ENCODE measurements at regions of chr10 and their contacts with region 1.

Region 1: DNA sequence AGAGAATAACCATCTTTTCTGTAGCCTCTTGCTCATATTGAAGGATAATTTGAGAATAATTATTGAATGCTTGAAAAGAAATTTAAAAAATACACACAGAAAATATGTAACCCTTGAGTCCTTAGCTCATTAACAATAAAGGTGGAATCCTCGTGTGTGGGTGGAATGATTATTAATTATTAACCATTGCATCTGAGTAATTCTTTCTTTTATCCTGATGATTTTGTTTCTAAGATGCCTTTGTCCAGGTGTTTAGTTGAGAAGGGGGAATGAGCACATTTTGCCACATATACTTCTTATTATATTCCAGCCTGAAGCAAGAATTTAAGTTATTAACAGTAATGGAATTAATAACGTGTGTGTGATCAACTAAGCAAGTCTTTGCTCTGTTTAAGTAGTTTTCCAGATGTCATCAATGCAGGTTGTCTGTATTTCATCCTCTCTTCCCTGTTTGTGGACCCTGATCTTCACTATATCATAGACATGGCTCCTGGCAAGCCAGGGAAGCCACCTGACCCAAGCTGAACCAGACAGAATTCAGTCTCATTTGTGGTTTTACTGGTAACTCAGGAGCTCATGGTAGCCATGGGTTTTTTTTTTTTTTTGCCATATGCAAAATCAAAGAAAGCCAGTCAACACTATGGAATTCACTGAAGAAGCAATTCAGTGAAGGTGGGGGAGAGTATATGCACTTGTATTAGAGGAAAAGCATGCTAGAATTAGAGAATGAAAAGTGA is 144.3 kb downstream of the KIF20B start:
- DNase-seq: peak; percentile 20 to 73
- H3K4me3 ChIP-seq: no peak overlapping the region
- H3K27ac ChIP-seq: no peak overlapping the region
- H3K4me1 ChIP-seq: peaks cover 20% of the 10 kb centered on the region
- H3K27me3 ChIP-seq: no peaks in the 10 kb centered on the region
- CTCF ChIP-seq: no peak

Region 2: GRCh38 chr10:89921422-89921821 is 75.7 kb after region 1 on chr10:
- CTCF ChIA-PET with region 1: no interaction called
- POLR2A ChIA-PET with region 1: no interaction called
- intact Hi-C with region 1: loop called (anchors 1 kb)
- DNase-seq: peak; percentile 64 to 99
- H3K4me3 ChIP-seq: no peak overlapping the region
- H3K27ac ChIP-seq: peak overlapping the region; percentile 71
- H3K4me1 ChIP-seq: peaks cover 61% of the 10 kb centered on the region
- H3K27me3 ChIP-seq: no peaks in the 10 kb centered on the region
- CTCF ChIP-seq: no peak

Region 3: GRCh38 chr10:89992575-89992974 is 146.9 kb after region 1 on chr10:
- CTCF ChIA-PET with region 1: no interaction called
- POLR2A ChIA-PET with region 1: no interaction called
- intact Hi-C with region 1: no loop called
- DNase-seq: no peak
- H3K4me3 ChIP-seq: no peak overlapping the region
- H3K27ac ChIP-seq: no peak overlapping the region
- H3K4me1 ChIP-seq: no peaks in the 10 kb centered on the region
- H3K27me3 ChIP-seq: no peaks in the 10 kb centered on the region
- CTCF ChIP-seq: no peak

Region 4: GRCh38 chr10:90062786-90063185 is 217.1 kb after region 1 on chr10:
- CTCF ChIA-PET with region 1: no interaction called
- POLR2A ChIA-PET with region 1: no interaction called
- intact Hi-C with region 1: no loop called
- DNase-seq: no peak
- H3K4me3 ChIP-seq: no peak overlapping the region
- H3K27ac ChIP-seq: no peak overlapping the region
- H3K4me1 ChIP-seq: no peaks in the 10 kb centered on the region
- H3K27me3 ChIP-seq: no peaks in the 10 kb centered on the region
- CTCF ChIP-seq: no peak

Measured in PC-9 (cell line).